Common myeloid progenitor, CD34-positive (primary cell): ENCODE measurements at regions of chr9 and their contacts with region 1.

Region 1: GRCh38 chr9:105679257-105680022 is 14.9 kb upstream of the TMEM38B start:
- DNase-seq: no peak
- H3K4me3 ChIP-seq: no peak overlapping the region
- H3K27ac ChIP-seq: no peak overlapping the region
- H3K4me1 ChIP-seq: peaks cover 0 to 3% (median 0%) of the 10 kb centered on the region in 4 experiments
- H3K27me3 ChIP-seq: no peaks in the 10 kb centered on the region

Region 2: GRCh38 chr9:105438141-105438806 is 241.2 kb before region 1 on chr9:
- CTCF ChIA-PET with region 1: no interaction called
- POLR2A ChIA-PET with region 1: no interaction called
- DNase-seq: no peak
- H3K4me3 ChIP-seq: no peak overlapping the region
- H3K27ac ChIP-seq: no peak overlapping the region
- H3K4me1 ChIP-seq: no peaks in the 10 kb centered on the region
- H3K27me3 ChIP-seq: no peaks in the 10 kb centered on the region

Region 3: DNA sequence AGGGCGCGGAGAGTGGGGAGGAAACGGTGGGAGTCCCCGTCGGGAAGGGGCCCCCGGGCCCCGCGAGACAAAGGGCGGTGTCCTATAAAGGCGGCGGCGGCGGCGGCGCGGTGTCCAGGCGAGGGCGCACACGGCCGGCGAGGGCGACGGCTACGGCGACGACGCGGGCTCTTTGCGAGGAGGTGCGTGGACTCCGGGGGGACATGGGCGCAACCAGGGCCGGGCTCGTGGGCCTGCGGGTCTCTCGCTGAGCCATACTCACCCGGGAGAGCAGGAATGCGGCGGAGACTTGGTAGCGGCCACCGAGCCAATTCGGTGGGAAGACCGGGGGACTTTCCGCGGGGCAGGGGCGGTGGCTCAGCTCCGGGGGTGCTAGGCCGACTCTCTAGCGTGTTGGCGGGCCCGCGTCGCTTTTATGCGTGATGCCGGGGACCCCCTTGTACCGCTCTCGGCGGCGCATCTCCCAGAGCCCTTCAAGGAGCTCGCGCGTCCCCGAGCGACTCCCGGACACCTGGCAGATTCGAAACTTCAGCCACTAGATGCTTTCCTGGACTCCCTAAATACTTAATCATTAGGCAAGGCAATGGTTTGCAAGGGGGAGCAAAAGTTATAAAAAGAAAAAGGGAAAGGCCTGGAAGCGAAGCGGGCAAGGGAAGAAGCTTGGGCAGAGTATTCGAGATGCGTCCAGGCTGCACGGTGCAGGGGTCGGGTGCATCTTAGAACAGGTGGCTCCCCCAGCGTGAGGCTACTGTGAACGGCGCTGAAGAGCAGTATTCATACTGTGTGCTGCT is 23.1 kb before region 1 on chr9:
- CTCF ChIA-PET with region 1: no interaction called
- POLR2A ChIA-PET with region 1: no interaction called
- DNase-seq: peak; percentile 17 to 56 (median 35)
- H3K4me3 ChIP-seq: peak overlapping the region; percentile 28 to 83 (median 67)
- H3K27ac ChIP-seq: no peak overlapping the region
- H3K4me1 ChIP-seq: peaks cover 2 to 16% (median 13%) of the 10 kb centered on the region in 4 experiments
- H3K27me3 ChIP-seq: peaks cover 0 to 12% (median 4%) of the 10 kb centered on the region in 5 experiments

Region 4: DNA sequence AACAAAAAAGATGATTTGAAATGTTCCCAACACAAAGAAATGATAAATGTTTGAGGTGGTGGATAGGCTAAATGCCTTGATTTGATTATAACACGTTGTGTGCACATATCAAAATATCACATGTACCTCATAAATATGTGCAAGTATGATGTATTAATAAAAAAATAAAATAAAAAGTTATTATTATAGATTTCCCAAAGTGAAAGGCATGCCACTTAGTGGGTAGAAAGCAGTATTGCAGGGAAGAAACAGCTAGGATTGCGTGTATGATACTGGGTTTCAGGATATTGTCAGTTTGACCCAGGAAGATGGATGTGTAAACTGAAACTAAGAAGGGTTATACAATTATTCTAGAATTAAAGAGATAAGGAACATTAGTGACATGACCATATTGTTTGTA is 11.3 kb after region 1 on chr9:
- CTCF ChIA-PET with region 1: interaction called, 10 read pairs
- POLR2A ChIA-PET with region 1: no interaction called
- DNase-seq: peak in 2 of 3 donors; percentile 24 to 33
- H3K4me3 ChIP-seq: no peak overlapping the region
- H3K27ac ChIP-seq: no peak overlapping the region
- H3K4me1 ChIP-seq: peaks cover 16 to 20% (median 18%) of the 10 kb centered on the region in 4 experiments
- H3K27me3 ChIP-seq: peaks cover 0 to 2% (median 0%) of the 10 kb centered on the region in 5 experiments

Region 5: GRCh38 chr9:105818903-105819302 is 139.5 kb after region 1 on chr9:
- CTCF ChIA-PET with region 1: no interaction called
- POLR2A ChIA-PET with region 1: no interaction called
- DNase-seq: no peak
- H3K4me3 ChIP-seq: no peak overlapping the region
- H3K27ac ChIP-seq: no peak overlapping the region
- H3K4me1 ChIP-seq: no peaks in the 10 kb centered on the region
- H3K27me3 ChIP-seq: no peaks in the 10 kb centered on the region